Heart right ventricle (tissue), 16 donors: ENCODE measurements at regions of chr10 and their contacts with region 1.

Region 1: DNA sequence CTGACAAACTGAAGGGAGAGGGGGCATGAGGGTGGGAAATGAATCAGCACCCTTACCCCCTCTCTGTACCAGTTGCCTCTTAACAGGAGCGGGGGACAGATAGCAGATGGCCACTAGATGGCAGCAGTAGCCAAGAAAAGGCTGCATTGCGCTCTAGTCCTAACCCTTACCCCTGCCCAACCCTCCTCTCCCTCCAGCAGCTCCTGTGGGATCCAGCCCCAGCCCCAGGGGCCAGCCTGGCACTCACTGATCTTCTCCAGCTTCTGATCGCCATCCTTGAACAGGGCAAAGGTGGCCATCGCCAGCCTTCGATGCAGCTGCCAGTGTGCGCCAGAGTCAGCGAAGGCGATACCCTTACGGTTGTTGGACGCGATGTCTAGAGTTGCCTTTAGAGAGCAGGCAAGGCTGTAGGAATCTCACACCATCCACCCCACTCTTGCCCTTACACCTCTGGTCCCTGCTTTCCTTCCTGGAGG is 2.2 kb downstream of the CYP17A1 start:
- DNase-seq: peak; percentile 57 to 80
- ATAC-seq: peak; percentile 90 to 96 (median 94)
- H3K4me3 ChIP-seq: no peak overlapping the region
- H3K27ac ChIP-seq: no peak overlapping the region
- H3K4me1 ChIP-seq: peaks cover 0 to 8% (median 5%) of the 10 kb centered on the region in 9 donors
- H3K27me3 ChIP-seq: no peaks in the 10 kb centered on the region
- CTCF ChIP-seq: peak; percentile 77 to 92 (median 90)

Region 2: GRCh38 chr10:102660888-102661657 is 174.0 kb before region 1 on chr10:
- intact Hi-C with region 1: no loop called
- DNase-seq: peak; percentile 67 to 78
- ATAC-seq: peak; percentile 63 to 83 (median 76)
- H3K4me3 ChIP-seq: peak overlapping the region in 4 of 10 donors; percentile 8 to 22 (median 10)
- H3K27ac ChIP-seq: peak overlapping the region in 8 of 10 donors; percentile 31 to 77 (median 53)
- H3K4me1 ChIP-seq: peaks cover 16 to 53% (median 37%) of the 10 kb centered on the region in 9 donors
- H3K27me3 ChIP-seq: no peaks in the 10 kb centered on the region
- CTCF ChIP-seq: no peak

Region 3: DNA sequence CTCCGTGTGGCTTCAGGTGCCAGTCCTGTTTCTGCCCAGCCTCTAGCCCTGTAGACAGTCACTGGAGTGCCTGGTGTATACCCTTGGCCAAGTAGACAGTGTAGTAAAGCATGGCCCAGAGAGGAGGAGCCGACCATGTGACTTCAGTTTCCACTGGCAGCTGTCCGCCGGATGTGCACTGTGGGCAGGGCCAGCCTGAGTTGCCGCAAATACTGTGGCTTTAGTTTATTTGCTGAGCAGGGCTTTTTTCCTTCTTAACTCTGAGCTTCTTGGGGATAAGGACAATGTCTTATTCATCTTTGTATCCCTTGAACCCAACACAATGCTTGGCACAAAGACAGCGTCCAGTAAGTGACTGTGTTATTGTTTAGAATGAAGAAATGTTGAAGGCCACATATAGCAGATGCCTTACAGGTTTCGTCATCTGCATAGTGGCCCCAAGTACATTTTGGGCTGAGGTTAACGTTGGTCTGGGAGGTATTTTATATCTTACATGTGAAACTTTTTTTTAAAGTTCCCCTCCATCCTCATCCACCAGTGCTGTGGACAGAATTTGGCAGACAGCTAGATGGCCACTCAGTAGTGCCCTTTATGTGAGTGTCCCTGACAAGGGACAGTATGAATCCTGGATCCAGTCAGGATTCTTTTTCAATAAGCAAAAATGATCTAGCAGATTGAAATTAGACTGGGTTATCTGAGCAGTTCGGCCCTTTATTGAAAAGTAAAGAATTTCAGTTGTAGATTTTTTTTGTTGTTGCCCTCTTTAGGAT is 38.5 kb before region 1 on chr10:
- intact Hi-C with region 1: no loop called
- DNase-seq: peak; percentile 86 to 91
- ATAC-seq: peak; percentile 94 to 97 (median 96)
- H3K4me3 ChIP-seq: peak overlapping the region in 8 of 10 donors; percentile 2 to 35 (median 19)
- H3K27ac ChIP-seq: peak overlapping the region; percentile 63 to 93 (median 84)
- H3K4me1 ChIP-seq: peaks cover 50 to 100% (median 97%) of the 10 kb centered on the region in 9 donors
- H3K27me3 ChIP-seq: no peaks in the 10 kb centered on the region
- CTCF ChIP-seq: no peak

Region 4: GRCh38 chr10:102904346-102904745 is 69.3 kb after region 1 on chr10:
- intact Hi-C with region 1: loop called (anchors 1 to 5 kb)
- DNase-seq: no peak
- ATAC-seq: no peak
- H3K4me3 ChIP-seq: no peak overlapping the region
- H3K27ac ChIP-seq: no peak overlapping the region
- H3K4me1 ChIP-seq: peaks cover 0 to 3% (median 0%) of the 10 kb centered on the region in 9 donors
- H3K27me3 ChIP-seq: no peaks in the 10 kb centered on the region
- CTCF ChIP-seq: no peak

Region 5: DNA sequence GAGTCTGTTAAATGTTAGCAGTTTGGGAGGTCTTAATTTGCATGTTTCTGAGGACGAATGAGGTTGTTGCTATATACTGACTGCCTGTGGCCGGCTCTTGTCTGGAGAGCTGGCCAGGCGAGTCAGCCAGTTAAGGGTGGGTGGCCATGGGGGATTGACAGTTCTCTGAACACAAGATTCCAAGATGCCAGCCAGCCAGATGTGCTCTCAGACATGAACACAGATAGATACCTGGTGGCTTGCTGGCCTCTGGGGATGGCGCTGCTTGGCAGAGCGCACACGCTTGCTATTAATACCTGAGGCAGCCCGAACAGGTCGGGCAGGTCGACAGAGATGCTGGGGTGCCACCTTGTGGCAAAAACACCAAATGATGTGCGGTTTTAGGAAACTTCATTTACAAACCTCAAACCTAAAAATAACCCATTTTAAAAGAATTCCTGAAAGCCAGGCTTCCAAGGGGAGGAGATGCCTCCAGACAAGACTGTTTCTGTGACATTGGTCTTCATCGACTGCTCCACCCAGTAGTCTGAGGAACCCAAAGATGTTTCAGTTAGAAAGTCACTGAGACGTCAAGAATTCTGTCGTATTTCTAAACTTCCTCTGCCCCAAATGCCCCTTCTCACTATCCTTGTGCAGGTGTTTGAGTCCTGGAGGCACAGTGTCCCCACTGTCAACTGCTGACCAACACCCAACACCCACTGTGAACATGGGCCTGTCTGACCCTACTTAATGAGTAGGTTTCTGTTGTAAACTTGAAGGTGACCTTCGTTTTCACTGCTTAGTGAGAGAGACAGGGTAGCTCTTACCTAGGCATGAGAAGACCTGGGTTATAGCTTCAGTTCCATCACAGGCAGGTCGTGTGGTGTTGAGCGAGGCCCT is 234.6 kb after region 1 on chr10:
- intact Hi-C with region 1: loop called in 9 of 10 experiments (anchors 5 to 10 kb)
- DNase-seq: peak; percentile 48 to 49
- ATAC-seq: peak; percentile 58 to 84 (median 80)
- H3K4me3 ChIP-seq: no peak overlapping the region
- H3K27ac ChIP-seq: no peak overlapping the region
- H3K4me1 ChIP-seq: peaks cover 0 to 19% (median 3%) of the 10 kb centered on the region in 9 donors
- H3K27me3 ChIP-seq: no peaks in the 10 kb centered on the region
- CTCF ChIP-seq: peak; percentile 38 to 76 (median 67)

Region 6: GRCh38 chr10:103333925-103334520 is 499.0 kb after region 1 on chr10:
- intact Hi-C with region 1: loop called in 2 of 10 experiments (anchors 10 kb)
- DNase-seq: no peak
- ATAC-seq: no peak
- H3K4me3 ChIP-seq: no peak overlapping the region
- H3K27ac ChIP-seq: no peak overlapping the region
- H3K4me1 ChIP-seq: no peaks in the 10 kb centered on the region
- H3K27me3 ChIP-seq: no peaks in the 10 kb centered on the region
- CTCF ChIP-seq: peak; percentile 23 to 68 (median 58)